ENCODE measurements at regions of chr5 and their contacts with region 1.

Region 1: DNA sequence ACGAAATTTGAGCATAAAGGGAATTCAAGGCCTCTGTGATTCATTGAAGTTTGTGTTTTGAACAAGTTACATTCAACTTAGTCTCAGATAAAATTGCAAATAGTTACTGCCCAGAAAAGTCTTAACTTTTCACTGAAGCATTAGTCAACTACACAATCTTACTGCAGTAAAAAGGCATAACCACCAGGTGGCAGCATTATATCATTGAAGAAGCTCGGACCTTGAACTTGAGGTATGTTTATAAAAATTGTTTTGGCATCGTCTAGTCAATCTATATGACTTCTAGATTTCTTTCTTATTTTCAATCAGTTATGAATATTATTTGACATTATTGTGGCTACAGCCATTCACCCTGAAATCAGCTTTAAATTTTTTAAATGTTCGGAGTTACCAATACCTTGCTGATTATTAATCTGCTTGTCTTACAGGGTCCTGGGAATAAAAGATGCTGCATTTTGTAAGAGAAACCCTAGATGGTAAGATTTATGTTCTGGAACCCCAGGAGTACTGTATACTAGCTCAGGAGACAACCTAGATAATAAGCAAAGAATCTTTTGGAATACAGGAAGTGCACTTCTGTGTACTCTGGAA is 83.9 kb upstream of the GRAMD2B start:
- DNase-seq: peak; percentile 75
- ATAC-seq: peak; percentile 75
- H3K4me3 ChIP-seq: no peak overlapping the region
- H3K27ac ChIP-seq: no peak overlapping the region
- H3K4me1 ChIP-seq: no peaks in the 10 kb centered on the region
- H3K27me3 ChIP-seq: no peaks in the 10 kb centered on the region; the same call in 1 of the 2 replicates
- CTCF ChIP-seq: peak; percentile 86
- POLR2A ChIP-seq: no peak
- RAD21 ChIP-seq: peak; percentile 93

Region 2: GRCh38 chr5:126544087-126544740 is 204.9 kb after region 1 on chr5:
- CTCF ChIA-PET with region 1: interaction called, 6 read pairs
- POLR2A ChIA-PET with region 1: no interaction called
- dilution Hi-C with region 1: loop called (anchors 10 kb)
- in situ Hi-C with region 1: no loop called
- intact Hi-C with region 1: loop called (anchors 1 kb)
- DNase-seq: peak; percentile 44
- ATAC-seq: peak; percentile 64
- H3K4me3 ChIP-seq: no peak overlapping the region
- H3K27ac ChIP-seq: no peak overlapping the region
- H3K4me1 ChIP-seq: no peaks in the 10 kb centered on the region
- H3K27me3 ChIP-seq: no peaks in the 10 kb centered on the region
- CTCF ChIP-seq: peak; percentile 48
- POLR2A ChIP-seq: no peak
- RAD21 ChIP-seq: peak; percentile 36

Region 3: DNA sequence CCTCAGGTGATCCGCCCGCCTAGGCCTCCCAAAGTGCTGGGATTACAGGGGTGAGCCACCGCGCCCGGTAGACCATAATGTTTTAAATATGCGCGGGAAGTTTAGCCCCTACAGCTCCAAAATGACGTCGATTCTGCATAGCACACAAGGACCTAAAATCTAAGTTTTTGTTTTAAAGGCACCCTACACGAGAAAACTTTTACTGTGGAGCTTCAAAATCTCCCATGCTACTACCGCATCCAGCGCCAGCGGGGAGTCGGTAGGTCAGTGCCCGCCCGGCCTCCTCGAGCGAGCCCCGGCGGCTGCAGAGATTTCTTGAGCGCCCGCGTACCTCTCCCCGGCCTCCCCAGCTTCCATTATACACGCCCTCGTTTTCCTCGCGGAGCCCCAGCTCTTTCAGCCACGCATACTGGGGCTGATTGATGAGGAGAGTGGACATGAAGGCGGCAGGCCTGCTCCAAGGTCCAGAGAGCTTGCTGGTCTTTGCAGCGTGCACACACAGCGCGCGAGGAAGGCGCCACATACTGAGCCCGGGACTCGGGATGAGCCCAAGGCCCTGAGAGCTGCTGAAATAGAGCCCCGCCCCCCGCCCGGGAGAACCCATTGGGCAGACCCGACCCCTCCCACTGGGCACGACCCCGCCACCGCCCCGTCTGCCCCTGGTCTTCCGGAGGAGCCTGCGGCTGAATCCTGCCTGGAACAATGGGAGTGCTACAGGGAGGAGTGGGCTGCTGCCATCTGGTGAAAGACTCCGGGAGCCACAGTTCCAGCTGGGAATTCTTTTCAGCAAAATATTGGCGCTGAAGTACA is 255.6 kb after region 1 on chr5 and contains the start of gene ALDH7A1:
- CTCF ChIA-PET with region 1: interaction called, 4 read pairs
- POLR2A ChIA-PET with region 1: no interaction called
- dilution Hi-C with region 1: no loop called
- in situ Hi-C with region 1: no loop called
- intact Hi-C with region 1: loop called (anchors 1 kb)
- DNase-seq: no peak
- ATAC-seq: peak; percentile 96
- H3K4me3 ChIP-seq: peak within 1 kb of the TSS; percentile 69
- H3K27ac ChIP-seq: peak within 1 kb of the TSS; percentile 70
- H3K4me1 ChIP-seq: peaks cover 4% of the 10 kb centered on the region
- H3K27me3 ChIP-seq: no peaks in the 10 kb centered on the region
- CTCF ChIP-seq: peak; percentile 56
- POLR2A ChIP-seq: peak; percentile 67
- RAD21 ChIP-seq: peak; percentile 50
- total RNA-seq, gene ALDH7A1: 40.9 and 43.9 TPM in 2 replicates

Region 4: GRCh38 chr5:126600631-126601511 is 261.6 kb after region 1 on chr5 and contains the start of gene PHAX:
- CTCF ChIA-PET with region 1: interaction called, 5 read pairs
- POLR2A ChIA-PET with region 1: no interaction called
- dilution Hi-C with region 1: no loop called
- in situ Hi-C with region 1: no loop called
- intact Hi-C with region 1: loop called (anchors 1 kb)
- DNase-seq: peak; percentile 76
- ATAC-seq: peak; percentile 98
- H3K4me3 ChIP-seq: peak within 1 kb of the TSS; percentile 94
- H3K27ac ChIP-seq: peak within 1 kb of the TSS; percentile 94
- H3K4me1 ChIP-seq: peaks cover 4% of the 10 kb centered on the region
- H3K27me3 ChIP-seq: no peaks in the 10 kb centered on the region
- CTCF ChIP-seq: peak; percentile 92
- POLR2A ChIP-seq: peak; percentile 40; the same call in 1 of the 2 replicates
- RAD21 ChIP-seq: peak; percentile 38
- total RNA-seq, gene PHAX: 46.4 and 104 TPM in 2 replicates

Region 5: DNA sequence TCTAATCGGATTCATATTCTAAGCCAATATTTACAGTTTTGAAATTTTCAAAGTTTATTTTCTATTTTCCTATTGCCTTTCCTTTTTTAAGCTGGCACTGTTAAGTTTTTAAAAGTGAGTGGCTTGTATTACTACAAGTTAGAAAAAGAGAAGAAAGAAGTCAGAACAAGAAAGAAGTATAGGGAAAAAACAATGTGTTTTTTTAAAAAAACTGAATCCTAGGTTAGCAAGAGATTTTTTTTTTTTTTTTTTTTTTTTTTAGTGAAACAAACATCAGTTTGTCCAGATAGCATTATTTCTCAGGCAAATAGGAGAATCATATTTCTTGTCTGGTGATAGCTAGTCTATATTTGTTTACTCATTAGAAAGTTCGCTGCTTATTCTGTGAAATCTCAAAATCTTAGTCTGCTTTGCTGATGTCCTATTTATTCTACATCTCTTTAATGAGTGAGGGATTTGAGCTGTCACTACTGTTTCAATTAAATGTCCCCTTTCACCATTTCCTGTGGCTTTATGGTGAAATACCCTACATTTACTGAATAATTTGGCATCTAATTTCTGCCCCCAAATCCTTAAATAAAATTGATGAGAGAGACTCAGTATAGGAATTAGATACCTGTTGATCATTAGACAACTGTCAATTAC is 418.5 kb after region 1 on chr5:
- CTCF ChIA-PET with region 1: no interaction called
- POLR2A ChIA-PET with region 1: no interaction called
- dilution Hi-C with region 1: no loop called
- in situ Hi-C with region 1: no loop called
- intact Hi-C with region 1: no loop called
- DNase-seq: no peak
- ATAC-seq: no peak
- H3K4me3 ChIP-seq: no peak overlapping the region
- H3K27ac ChIP-seq: no peak overlapping the region
- H3K4me1 ChIP-seq: no peaks in the 10 kb centered on the region
- H3K27me3 ChIP-seq: no peaks in the 10 kb centered on the region
- CTCF ChIP-seq: no peak
- POLR2A ChIP-seq: no peak
- RAD21 ChIP-seq: no peak